A549 (cell line): ENCODE measurements at regions of chr19 and their contacts with region 1.

Region 1: GRCh38 chr19:3102228-3103140 is 8.3 kb downstream of the GNA11 start:
- DNase-seq: no peak
- ATAC-seq: no peak
- H3K4me3 ChIP-seq: no peak overlapping the region
- H3K27ac ChIP-seq: no peak overlapping the region
- H3K4me1 ChIP-seq: peaks cover 4% of the 10 kb centered on the region; the same call in 1 of the 3 replicates
- CTCF ChIP-seq: no peak
- EP300 ChIP-seq: no peak
- POLR2A ChIP-seq: no peak
- RAD21 ChIP-seq: no peak

Region 2: DNA sequence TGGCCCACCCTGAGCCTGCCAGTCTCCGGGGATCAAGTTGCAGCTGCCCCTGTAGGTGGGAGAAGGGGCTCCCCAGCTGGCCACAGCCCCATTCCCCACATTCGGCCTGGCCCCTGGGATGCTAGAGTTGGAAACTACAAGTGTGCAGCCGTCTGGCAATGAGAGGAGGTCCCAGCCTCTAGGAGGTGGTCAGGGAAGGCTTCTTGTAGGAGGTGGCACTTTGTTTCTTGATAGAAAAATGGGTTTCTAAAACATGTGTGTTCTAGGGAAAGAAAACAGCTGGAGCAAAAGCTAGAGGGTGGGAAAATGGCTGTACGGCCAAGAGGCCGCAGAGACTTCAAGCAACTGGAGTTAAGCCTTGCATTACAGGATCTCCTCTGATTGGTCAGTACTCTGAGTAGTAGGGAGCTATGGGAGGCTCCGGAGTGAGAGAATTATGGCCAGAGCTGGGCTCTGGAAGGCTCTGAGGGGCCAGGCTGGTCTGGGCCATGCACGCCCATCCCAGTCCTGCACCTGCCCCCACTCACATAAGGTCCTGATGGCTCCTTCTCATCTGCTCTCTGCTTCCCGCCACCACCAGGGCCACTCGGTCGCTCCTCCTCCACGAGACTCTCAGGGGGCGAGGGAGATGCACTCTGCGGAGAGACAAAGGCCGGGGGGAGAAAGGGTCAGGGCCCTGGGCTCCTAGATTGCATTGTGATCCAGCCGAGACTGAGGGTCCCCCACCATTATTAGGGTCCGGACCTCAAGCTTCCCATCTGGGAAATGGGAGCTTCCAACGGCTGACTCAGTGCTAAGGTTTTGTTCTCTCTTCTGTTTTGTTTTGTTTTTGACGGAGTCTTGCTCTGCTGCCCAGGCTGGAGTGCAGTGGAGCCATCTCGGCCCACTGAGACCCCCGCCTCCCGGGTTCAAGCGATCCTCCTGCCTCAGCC is 87.1 kb before region 1 on chr19:
- CTCF ChIA-PET with region 1: interaction called, 10 read pairs
- POLR2A ChIA-PET with region 1: no interaction called
- DNase-seq: no peak
- ATAC-seq: no peak
- H3K4me3 ChIP-seq: no peak overlapping the region
- H3K27ac ChIP-seq: no peak overlapping the region
- H3K4me1 ChIP-seq: no peaks in the 10 kb centered on the region
- CTCF ChIP-seq: no peak
- EP300 ChIP-seq: no peak
- POLR2A ChIP-seq: no peak
- RAD21 ChIP-seq: no peak

Region 3: DNA sequence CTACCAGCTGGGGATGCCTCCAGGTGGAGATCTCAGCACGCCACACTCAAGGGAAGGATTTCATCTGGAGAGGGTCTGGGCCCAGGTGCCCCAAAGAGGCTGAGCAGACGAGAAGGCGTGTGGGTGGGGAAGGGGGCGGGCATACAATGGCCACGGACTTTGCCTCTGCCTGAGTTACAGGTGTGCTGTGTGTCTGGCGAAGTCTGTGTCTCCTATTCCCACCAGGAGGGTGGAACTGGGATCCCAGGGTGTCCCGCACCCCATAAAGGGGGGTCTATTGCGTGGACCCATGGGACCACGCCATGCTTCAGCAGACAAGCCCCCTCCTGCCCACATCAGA is 77.0 kb before region 1 on chr19:
- CTCF ChIA-PET with region 1: no interaction called
- POLR2A ChIA-PET with region 1: no interaction called
- DNase-seq: no peak
- ATAC-seq: no peak
- H3K4me3 ChIP-seq: no peak overlapping the region
- H3K27ac ChIP-seq: no peak overlapping the region
- H3K4me1 ChIP-seq: no peaks in the 10 kb centered on the region; the same call in 2 of the 3 replicates
- CTCF ChIP-seq: no peak
- EP300 ChIP-seq: no peak
- POLR2A ChIP-seq: no peak
- RAD21 ChIP-seq: no peak

Region 4: DNA sequence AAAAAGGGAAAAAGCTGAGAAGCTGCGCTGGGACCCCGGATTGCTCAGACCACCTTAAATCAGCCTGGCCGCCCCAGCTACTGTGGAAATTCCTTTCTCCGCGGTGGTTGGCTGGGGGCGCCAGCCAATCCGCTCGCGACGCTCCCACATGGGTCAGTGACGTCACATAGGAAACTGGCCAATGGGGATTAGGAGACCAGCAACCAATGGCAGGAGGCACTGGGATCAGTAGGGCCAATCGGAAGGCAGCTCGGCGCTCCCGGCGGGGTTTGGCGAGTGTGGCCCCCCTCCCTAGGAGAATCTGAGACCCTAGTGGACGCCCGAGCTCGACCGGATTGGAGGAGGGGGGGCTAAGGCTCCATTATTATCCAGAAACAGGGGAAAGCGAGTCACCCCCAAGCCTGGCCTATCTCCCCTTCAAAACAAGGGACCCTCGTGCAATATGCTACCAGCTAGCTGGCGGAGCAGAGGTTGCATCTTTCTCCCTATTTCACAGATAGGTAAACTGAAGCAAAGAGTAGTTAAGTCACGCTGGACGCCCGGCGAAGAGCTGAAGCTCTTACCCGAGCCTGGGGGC is 66.9 kb before region 1 on chr19:
- CTCF ChIA-PET with region 1: interaction called, 10 read pairs
- POLR2A ChIA-PET with region 1: no interaction called
- DNase-seq: peak; percentile 98 to 99
- ATAC-seq: peak; percentile 90 to 94
- H3K4me3 ChIP-seq: peak overlapping the region; percentile 65
- H3K27ac ChIP-seq: peak overlapping the region; percentile 90 to 94
- H3K4me1 ChIP-seq: peaks cover 12% of the 10 kb centered on the region
- CTCF ChIP-seq: no peak
- EP300 ChIP-seq: no peak
- POLR2A ChIP-seq: peak; percentile 3; the same call in 1 of the 2 replicates
- RAD21 ChIP-seq: no peak

Region 5: DNA sequence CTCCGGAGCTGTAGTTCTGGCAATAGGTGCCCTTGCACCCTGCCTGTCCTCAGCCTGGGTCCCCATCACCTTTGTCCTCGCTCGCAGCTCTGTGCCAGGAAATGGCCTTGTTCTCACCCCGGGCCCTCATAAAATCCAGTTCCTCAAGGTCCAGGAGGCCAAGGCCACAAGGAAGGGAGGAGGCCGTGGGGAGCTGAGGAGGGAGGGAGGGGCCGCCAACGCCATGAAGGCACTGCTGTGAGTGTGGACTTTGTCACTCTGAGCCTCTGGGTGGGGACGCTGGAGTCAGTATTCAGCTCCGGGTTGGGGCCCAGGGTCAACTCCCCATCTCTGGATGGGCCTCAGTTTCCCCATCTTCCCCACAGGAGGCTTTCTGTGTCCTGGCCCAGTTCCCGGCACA is 17.5 kb before region 1 on chr19:
- CTCF ChIA-PET with region 1: interaction called, 12 read pairs
- POLR2A ChIA-PET with region 1: no interaction called
- DNase-seq: no peak
- ATAC-seq: no peak
- H3K4me3 ChIP-seq: no peak overlapping the region
- H3K27ac ChIP-seq: no peak overlapping the region
- H3K4me1 ChIP-seq: no peaks in the 10 kb centered on the region
- CTCF ChIP-seq: no peak
- EP300 ChIP-seq: no peak
- POLR2A ChIP-seq: no peak
- RAD21 ChIP-seq: no peak

Region 6: DNA sequence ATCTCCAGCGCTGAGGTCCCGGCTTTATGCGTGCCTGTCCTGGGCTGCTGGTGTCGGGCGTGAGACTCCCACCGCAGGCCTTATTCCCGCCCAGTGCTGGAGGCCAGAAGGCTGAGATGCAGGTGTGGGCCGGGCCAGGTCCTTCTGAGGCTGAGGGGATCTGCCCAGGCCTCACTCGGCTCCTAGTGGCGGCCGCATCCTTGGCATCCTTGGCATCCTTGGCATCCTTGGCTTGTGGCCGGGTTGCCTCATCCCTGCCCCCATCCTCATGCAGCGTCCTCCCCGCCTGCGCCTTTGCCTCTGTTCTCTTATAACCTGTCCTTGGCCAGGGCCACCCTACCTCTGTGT is 13.7 kb after region 1 on chr19:
- CTCF ChIA-PET with region 1: interaction called, 17 read pairs
- POLR2A ChIA-PET with region 1: no interaction called
- DNase-seq: peak in 1 of 2 experiments; percentile 36
- ATAC-seq: peak; percentile 48 to 73; a peak in 4 of 6 replicates
- H3K4me3 ChIP-seq: no peak overlapping the region
- H3K27ac ChIP-seq: peak overlapping the region; percentile 68 to 87
- H3K4me1 ChIP-seq: peaks cover 18% of the 10 kb centered on the region
- CTCF ChIP-seq: no peak
- EP300 ChIP-seq: no peak
- POLR2A ChIP-seq: no peak
- RAD21 ChIP-seq: no peak